PC-9 (cell line): ENCODE measurements at regions of chr2 and their contacts with region 1.

Region 1: GRCh38 chr2:1550658-1551316 is 137.5 kb downstream of the TPO start:
- DNase-seq: peak in 1 of 2 experiments; percentile 53
- H3K4me3 ChIP-seq: no peak overlapping the region
- H3K27ac ChIP-seq: no peak overlapping the region
- H3K4me1 ChIP-seq: peaks cover 27% of the 10 kb centered on the region
- H3K27me3 ChIP-seq: peaks cover 7% of the 10 kb centered on the region; the same call in 1 of the 2 replicates
- CTCF ChIP-seq: peak; percentile 95

Region 2: GRCh38 chr2:677056-677965 is 873.5 kb before region 1 on chr2 and contains the start of gene TMEM18:
- CTCF ChIA-PET with region 1: no interaction called
- POLR2A ChIA-PET with region 1: no interaction called
- intact Hi-C with region 1: loop called (anchors 10 kb)
- DNase-seq: peak; percentile 90 to 98
- H3K4me3 ChIP-seq: peak within 1 kb of the TSS; percentile 77
- H3K27ac ChIP-seq: peak within 1 kb of the TSS; percentile 97
- H3K4me1 ChIP-seq: peaks cover 22% of the 10 kb centered on the region
- H3K27me3 ChIP-seq: peaks cover 13% of the 10 kb centered on the region; the same call in 1 of the 2 replicates
- CTCF ChIP-seq: no peak; the same call in 1 of the 2 replicates
- total RNA-seq, gene TMEM18: 30.5 and 32.4 TPM in 2 replicates

Region 3: GRCh38 chr2:1431886-1432400 is 118.8 kb before region 1 on chr2:
- CTCF ChIA-PET with region 1: no interaction called
- POLR2A ChIA-PET with region 1: no interaction called
- intact Hi-C with region 1: no loop called
- DNase-seq: no peak
- H3K4me3 ChIP-seq: no peak overlapping the region
- H3K27ac ChIP-seq: no peak overlapping the region
- H3K4me1 ChIP-seq: no peaks in the 10 kb centered on the region
- H3K27me3 ChIP-seq: peaks cover 66% of the 10 kb centered on the region
- CTCF ChIP-seq: no peak

Region 4: GRCh38 chr2:1593371-1594290 is 42.8 kb after region 1 on chr2:
- CTCF ChIA-PET with region 1: no interaction called
- POLR2A ChIA-PET with region 1: no interaction called
- intact Hi-C with region 1: loop called (anchors 2 kb)
- DNase-seq: peak; percentile 81
- H3K4me3 ChIP-seq: no peak overlapping the region; the same call in 1 of the 2 replicates
- H3K27ac ChIP-seq: peak overlapping the region; percentile 38
- H3K4me1 ChIP-seq: peaks cover 31% of the 10 kb centered on the region
- H3K27me3 ChIP-seq: peaks cover 7% of the 10 kb centered on the region; the same call in 1 of the 2 replicates
- CTCF ChIP-seq: no peak

Region 5: GRCh38 chr2:1675633-1676032 is 124.8 kb after region 1 on chr2:
- CTCF ChIA-PET with region 1: interaction called, 11 read pairs
- POLR2A ChIA-PET with region 1: no interaction called
- intact Hi-C with region 1: loop called (anchors 5 kb)
- DNase-seq: peak; percentile 62 to 87
- H3K4me3 ChIP-seq: no peak overlapping the region
- H3K27ac ChIP-seq: peak overlapping the region; percentile 59
- H3K4me1 ChIP-seq: peaks cover 5% of the 10 kb centered on the region
- H3K27me3 ChIP-seq: peaks cover 15% of the 10 kb centered on the region; the same call in 1 of the 2 replicates
- CTCF ChIP-seq: peak; percentile 57

Region 6: GRCh38 chr2:1742681-1743395 is 192.1 kb after region 1 on chr2:
- CTCF ChIA-PET with region 1: no interaction called
- POLR2A ChIA-PET with region 1: no interaction called
- intact Hi-C with region 1: loop called (anchors 2 kb)
- DNase-seq: peak; percentile 77
- H3K4me3 ChIP-seq: peak overlapping the region; percentile 64
- H3K27ac ChIP-seq: peak overlapping the region; percentile 66
- H3K4me1 ChIP-seq: peaks cover 13% of the 10 kb centered on the region
- H3K27me3 ChIP-seq: peaks cover 10% of the 10 kb centered on the region; the same call in 1 of the 2 replicates
- CTCF ChIP-seq: peak; percentile 48